ENCODE measurements at regions of chr20 and their contacts with region 1.

Region 1: DNA sequence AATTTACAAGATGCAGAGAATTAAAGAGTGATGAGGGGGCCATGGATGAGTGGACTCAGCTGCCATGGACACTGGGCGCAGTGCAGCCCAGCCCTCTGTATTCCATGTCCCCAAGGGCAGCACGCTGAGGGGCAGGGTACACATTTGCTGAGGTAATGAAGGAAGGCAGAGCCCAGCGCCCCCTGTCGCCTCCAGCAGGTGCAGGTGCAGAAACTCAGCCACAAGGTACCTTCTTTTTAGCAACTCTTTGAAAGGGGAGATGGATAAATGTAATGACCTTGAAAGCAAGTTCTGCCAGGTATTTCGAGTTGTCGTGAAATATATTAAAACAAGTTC is 7.1 kb downstream of the CD93 start:
- DNase-seq: no peak
- ATAC-seq: peak in 2 of 4 donors; percentile 41 to 75
- H3K4me3 ChIP-seq: no peak overlapping the region
- H3K27ac ChIP-seq: no peak overlapping the region
- H3K4me1 ChIP-seq: no peaks in the 10 kb centered on the region
- H3K27me3 ChIP-seq: no peaks in the 10 kb centered on the region
- CTCF ChIP-seq: no peak

Region 2: DNA sequence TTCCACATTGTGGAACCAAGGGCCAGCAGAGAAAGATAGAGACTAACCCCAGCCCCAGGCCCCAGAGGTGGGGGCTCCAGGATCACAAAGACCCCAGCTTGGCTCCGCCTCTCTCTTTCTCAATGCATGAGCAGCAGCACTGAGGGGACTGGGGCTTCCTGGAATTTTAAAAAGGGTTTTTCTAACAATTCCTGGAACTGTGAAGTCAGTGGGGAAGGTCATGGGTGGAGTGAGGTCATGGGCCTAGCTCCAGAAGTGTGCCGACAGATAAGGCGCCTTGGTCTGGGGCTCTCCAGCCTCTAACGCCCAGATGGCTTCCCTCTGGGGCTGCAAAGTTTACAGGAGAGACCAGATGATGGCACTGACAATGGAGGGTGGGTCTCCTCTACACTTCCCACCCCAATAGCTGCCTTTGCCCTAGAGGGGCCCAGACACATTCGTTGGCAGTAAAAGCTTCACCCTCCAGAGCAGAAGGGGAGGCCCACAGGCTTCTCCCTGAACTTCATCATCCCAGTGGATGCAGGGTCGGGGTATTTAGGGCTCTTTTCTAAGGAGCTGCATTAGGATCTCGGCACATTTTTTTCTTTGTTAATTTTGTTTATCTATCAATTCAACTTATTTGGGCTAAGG is 54.1 kb after region 1 on chr20:
- intact Hi-C with region 1: loop called in 1 of 3 experiments (anchors 10 kb)
- DNase-seq: peak in 1 of 6 donors; percentile 27
- ATAC-seq: peak in 2 of 4 donors; percentile 22 to 45
- H3K4me3 ChIP-seq: no peak overlapping the region
- H3K27ac ChIP-seq: no peak overlapping the region
- H3K4me1 ChIP-seq: no peaks in the 10 kb centered on the region
- H3K27me3 ChIP-seq: no peaks in the 10 kb centered on the region
- CTCF ChIP-seq: no peak